Endothelial cell of umbilical vein (primary cell): ENCODE measurements at regions of chr1 and their contacts with region 1.

Region 1: DNA sequence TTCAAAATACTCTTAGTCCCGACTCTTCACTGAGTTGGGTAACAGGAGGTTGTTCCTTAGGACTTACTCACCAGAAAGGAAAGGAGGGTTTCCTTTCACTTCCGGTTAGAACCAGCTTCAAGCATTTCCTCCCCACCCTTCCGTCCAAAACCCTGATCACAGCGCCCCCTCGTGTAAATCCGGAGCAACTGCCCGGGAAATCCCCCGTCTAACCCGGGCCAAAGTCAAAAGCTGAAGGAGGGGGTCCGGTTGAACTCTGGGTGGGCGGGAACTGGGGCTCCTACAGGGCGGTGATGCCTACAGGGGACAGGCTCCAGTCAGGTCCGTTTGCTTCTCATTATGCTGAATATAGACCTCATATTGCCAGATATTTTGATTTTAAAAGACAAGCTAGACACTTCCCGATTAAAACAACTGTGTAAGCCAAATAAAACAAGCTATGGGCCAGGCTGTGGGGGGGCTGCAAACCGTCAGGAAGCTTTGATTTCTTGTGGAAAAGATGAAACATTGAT is 15.0 kb upstream of the MTARC2 start:
- DNase-seq: peak; percentile 92
- H3K4me3 ChIP-seq: peak overlapping the region in 1 of 3 experiments; percentile 47
- H3K27ac ChIP-seq: peak overlapping the region; percentile 96
- H3K4me1 ChIP-seq: peaks cover 32% of the 10 kb centered on the region
- H3K27me3 ChIP-seq: no peaks in the 10 kb centered on the region
- CTCF ChIP-seq: peak; percentile 84 to 85
- POLR2A ChIP-seq: no peak

Region 2: DNA sequence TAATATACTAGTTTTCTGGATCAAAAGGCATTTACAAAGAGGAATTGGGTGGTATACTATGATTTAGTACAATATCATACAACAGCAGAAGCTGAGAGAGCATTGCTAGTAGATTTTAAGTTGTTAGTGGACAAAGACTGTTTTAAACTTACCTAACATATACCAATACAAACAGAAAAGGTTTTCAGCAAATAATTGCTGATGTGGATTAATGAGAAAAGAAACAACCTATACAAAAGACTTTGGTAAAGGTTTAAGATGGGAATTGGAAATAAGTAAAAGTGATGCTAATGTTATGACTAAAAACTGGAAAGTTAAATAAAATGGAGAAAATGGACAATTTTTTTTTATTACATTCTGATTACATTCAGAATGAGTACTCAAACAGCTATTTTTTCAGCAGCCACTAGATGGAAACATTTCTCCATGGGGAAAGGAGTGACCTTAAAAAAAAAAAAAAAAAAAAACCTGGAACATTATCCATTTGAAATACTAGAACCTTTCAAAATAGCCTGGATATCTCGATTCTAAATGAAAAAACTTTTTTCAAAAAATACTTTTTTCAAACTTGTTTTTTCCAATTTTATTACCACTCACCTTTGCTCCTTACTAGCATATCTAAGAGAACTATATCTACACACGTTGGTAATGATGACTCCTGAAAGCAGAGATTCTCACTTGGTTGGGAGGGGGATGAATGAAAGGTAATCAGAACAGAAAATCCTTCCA is 742.2 kb before region 1 on chr1:
- CTCF ChIA-PET with region 1: interaction called, 4 read pairs
- POLR2A ChIA-PET with region 1: no interaction called
- dilution Hi-C with region 1: no loop called
- intact Hi-C with region 1: loop called (anchors 5 kb)
- DNase-seq: peak; percentile 58
- H3K4me3 ChIP-seq: no peak overlapping the region
- H3K27ac ChIP-seq: no peak overlapping the region
- H3K4me1 ChIP-seq: no peaks in the 10 kb centered on the region
- H3K27me3 ChIP-seq: no peaks in the 10 kb centered on the region
- CTCF ChIP-seq: peak; percentile 31 to 47
- POLR2A ChIP-seq: no peak

Region 3: DNA sequence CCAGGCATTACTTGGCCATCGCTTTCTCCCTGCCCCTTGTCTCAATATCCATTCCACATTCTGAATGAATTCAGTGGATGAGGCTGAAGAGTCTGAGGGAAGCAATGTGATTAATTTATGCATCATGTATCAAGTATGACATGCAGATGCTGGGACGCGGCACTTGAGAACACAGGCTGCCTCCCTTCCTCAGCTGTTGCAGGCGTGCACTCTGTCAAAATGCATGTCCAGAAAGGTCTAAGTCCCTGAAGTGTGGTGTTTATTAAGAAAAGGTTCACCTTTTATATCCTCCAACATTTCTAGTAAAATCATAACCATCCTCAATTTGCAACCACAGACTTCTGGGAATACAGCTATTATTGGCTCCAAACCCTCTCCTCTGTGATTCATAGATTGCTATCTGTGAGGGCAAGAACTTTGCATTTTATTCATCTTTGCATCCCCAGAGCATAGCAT is 438.3 kb before region 1 on chr1:
- CTCF ChIA-PET with region 1: interaction called, 37 read pairs
- POLR2A ChIA-PET with region 1: no interaction called
- dilution Hi-C with region 1: no loop called
- intact Hi-C with region 1: loop called (anchors 1 kb)
- DNase-seq: no peak
- H3K4me3 ChIP-seq: no peak overlapping the region
- H3K27ac ChIP-seq: no peak overlapping the region
- H3K4me1 ChIP-seq: peaks cover under 1% of the 10 kb centered on the region
- H3K27me3 ChIP-seq: peaks cover 10 to 16% of the 10 kb centered on the region in 2 experiments
- CTCF ChIP-seq: no peak
- POLR2A ChIP-seq: no peak

Region 4: DNA sequence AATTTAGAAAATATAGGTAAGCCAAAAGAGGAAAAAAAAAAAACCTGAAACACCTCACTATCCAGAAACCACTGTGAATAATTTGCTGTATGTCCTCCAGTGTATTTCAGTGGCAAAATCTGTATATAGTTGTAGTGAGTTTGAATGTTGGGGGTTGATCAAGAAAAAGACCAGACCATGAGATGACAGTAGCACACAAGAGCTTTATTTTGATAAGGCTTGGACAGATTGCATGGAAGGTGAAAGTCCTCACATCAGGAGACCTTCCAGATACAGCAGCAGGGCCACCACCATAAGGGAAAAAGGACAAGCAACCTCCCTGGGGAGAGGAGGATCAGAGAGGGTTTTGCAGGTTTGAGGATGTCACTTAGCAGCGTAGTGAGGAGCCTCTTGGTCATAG is 59.2 kb before region 1 on chr1:
- CTCF ChIA-PET with region 1: interaction called, 17 read pairs
- POLR2A ChIA-PET with region 1: no interaction called
- dilution Hi-C with region 1: no loop called
- intact Hi-C with region 1: no loop called
- DNase-seq: no peak
- H3K4me3 ChIP-seq: no peak overlapping the region
- H3K27ac ChIP-seq: no peak overlapping the region
- H3K4me1 ChIP-seq: no peaks in the 10 kb centered on the region
- H3K27me3 ChIP-seq: no peaks in the 10 kb centered on the region
- CTCF ChIP-seq: no peak
- POLR2A ChIP-seq: no peak

Region 5: GRCh38 chr1:220700556-220701179 is 32.5 kb before region 1 on chr1:
- CTCF ChIA-PET with region 1: interaction called, 19 read pairs
- POLR2A ChIA-PET with region 1: no interaction called
- dilution Hi-C with region 1: no loop called
- intact Hi-C with region 1: no loop called
- DNase-seq: peak; percentile 38
- H3K4me3 ChIP-seq: no peak overlapping the region
- H3K27ac ChIP-seq: no peak overlapping the region
- H3K4me1 ChIP-seq: no peaks in the 10 kb centered on the region
- H3K27me3 ChIP-seq: no peaks in the 10 kb centered on the region
- CTCF ChIP-seq: no peak
- POLR2A ChIP-seq: no peak

Region 6: DNA sequence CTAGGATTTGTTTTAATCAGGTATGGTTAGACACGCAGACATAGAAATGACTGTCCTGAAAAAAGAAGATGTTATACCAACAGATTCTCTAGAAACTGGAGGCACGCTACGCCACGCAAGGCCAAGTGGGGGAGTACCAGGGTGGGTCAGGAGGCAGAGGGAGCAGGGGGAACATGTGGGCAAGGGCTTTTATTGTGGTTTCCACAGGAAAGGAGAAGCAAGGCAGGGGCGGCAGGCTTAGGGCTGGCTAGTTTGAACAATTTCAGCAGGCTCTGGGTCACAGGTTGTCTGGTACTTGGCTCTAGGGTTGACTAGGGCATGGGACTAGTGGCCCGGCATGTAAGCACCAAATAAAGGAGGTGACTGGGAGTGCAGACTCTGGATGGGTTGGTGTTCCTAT is 22.2 kb after region 1 on chr1:
- CTCF ChIA-PET with region 1: interaction called, 82 read pairs
- POLR2A ChIA-PET with region 1: no interaction called
- dilution Hi-C with region 1: no loop called
- intact Hi-C with region 1: no loop called
- DNase-seq: no peak
- H3K4me3 ChIP-seq: no peak overlapping the region
- H3K27ac ChIP-seq: no peak overlapping the region
- H3K4me1 ChIP-seq: no peaks in the 10 kb centered on the region
- H3K27me3 ChIP-seq: no peaks in the 10 kb centered on the region
- CTCF ChIP-seq: no peak
- POLR2A ChIP-seq: no peak